ENCODE measurements at regions of chr17 and their contacts with region 1.

Region 1: GRCh38 chr17:6657633-6658287 is 6.2 kb downstream of the C17orf100 start:
- DNase-seq: peak; percentile 34
- H3K4me3 Mint-ChIP-seq: peak overlapping the region; percentile 80
- H3K27ac Mint-ChIP-seq: peak overlapping the region; percentile 78
- H3K4me1 Mint-ChIP-seq: peaks cover 43% of the 10 kb centered on the region
- H3K27me3 Mint-ChIP-seq: no peaks in the 10 kb centered on the region

Region 2: GRCh38 chr17:6640536-6641373 is 17.0 kb before region 1 on chr17 and contains the starts of genes KIAA0753 and TXNDC17:
- CTCF ChIA-PET with region 1: no interaction called
- intact Hi-C with region 1: loop called (anchors 2 kb)
- DNase-seq: peak; percentile 93
- H3K4me3 Mint-ChIP-seq: peak within 1 kb of the TSS; percentile 81
- H3K27ac Mint-ChIP-seq: peak within 1 kb of the TSS; percentile 97
- H3K4me1 Mint-ChIP-seq: peaks cover 51% of the 10 kb centered on the region
- H3K27me3 Mint-ChIP-seq: no peaks in the 10 kb centered on the region
- total RNA-seq, gene KIAA0753: 7.7 to 8.1 TPM
- total RNA-seq, gene TXNDC17: 71.4 to 85.8 TPM